Activated CD8-positive, alpha-beta T cell treated with anti-CD3 and anti-CD28 coated beads for 36 hours (primary cell): ENCODE measurements at regions of chr9 and their contacts with region 1.

Region 1: GRCh38 chr9:83596896-83597504 is 25.9 kb upstream of the IDNK start:
- DNase-seq: peak; percentile 74
- ATAC-seq: peak; percentile 64
- H3K4me3 Mint-ChIP-seq: no peak overlapping the region
- H3K27ac Mint-ChIP-seq: no peak overlapping the region
- H3K4me1 Mint-ChIP-seq: no peaks in the 10 kb centered on the region
- H3K27me3 Mint-ChIP-seq: no peaks in the 10 kb centered on the region
- CTCF ChIP-seq: peak; percentile 79

Region 2: DNA sequence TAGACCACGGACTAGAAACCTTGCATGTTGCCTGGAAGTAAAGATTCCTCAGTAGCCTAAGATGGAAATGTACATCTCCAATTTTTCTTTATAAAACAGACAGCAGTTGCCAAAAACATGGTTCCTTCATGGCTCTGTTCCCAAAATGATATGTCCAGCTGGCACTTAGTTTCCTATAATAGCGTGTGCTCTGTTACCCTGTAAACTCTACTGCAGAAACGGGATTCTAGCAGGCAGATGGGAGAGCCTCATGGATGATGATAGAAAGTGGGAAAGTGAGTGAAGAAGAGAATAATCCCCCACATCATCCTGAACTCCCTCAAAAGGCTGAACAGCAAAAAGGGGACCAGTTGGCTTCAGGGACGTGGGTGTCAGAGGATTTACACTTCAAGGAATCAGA is 177.0 kb before region 1 on chr9:
- CTCF ChIA-PET with region 1: no interaction called
- POLR2A ChIA-PET with region 1: no interaction called
- intact Hi-C with region 1: no loop called
- DNase-seq: no peak
- ATAC-seq: no peak
- H3K4me3 Mint-ChIP-seq: no peak overlapping the region
- H3K27ac Mint-ChIP-seq: no peak overlapping the region
- H3K4me1 Mint-ChIP-seq: no peaks in the 10 kb centered on the region
- H3K27me3 Mint-ChIP-seq: no peaks in the 10 kb centered on the region
- CTCF ChIP-seq: no peak

Region 3: DNA sequence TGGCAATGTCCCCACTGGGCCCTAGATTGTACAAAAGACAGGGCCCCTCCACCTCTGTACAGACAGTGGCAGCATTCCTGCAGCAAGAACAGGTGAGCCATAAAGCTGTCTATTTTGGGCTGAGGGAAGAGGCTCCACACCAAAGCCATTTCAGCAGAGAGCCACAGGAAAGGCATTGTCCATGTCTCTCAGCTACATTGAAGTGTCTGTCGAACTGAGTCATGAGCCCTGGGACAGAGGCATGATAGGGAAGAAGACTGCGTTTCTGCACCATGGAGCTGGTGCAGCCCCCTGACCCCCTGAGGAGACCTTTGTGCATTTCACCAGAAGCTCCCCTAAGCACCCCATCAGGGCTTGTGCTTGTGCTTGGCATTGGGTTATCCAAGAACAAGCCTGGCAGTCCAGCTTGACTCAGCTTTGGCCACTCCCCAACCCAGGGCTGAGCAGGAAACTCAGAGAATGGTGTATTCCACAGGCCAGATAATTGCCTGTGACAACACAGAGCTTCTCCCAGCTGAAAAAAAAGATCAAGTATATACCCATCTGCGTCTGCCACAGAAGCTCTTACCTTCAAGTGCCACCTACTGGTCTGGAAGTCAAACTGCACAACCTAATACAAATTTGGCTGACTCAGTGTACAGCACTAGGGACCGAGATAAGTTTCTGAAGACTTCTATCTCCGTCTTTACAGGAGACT is 52.9 kb before region 1 on chr9:
- CTCF ChIA-PET with region 1: interaction called, 10 read pairs
- POLR2A ChIA-PET with region 1: no interaction called
- intact Hi-C with region 1: no loop called
- DNase-seq: peak; percentile 3
- ATAC-seq: peak; percentile 71
- H3K4me3 Mint-ChIP-seq: no peak overlapping the region
- H3K27ac Mint-ChIP-seq: no peak overlapping the region
- H3K4me1 Mint-ChIP-seq: no peaks in the 10 kb centered on the region
- H3K27me3 Mint-ChIP-seq: peaks cover 12% of the 10 kb centered on the region
- CTCF ChIP-seq: peak; percentile 61